ENCODE measurements at regions of chr1 and their contacts with region 1.

Region 1: GRCh38 chr1:9371391-9371935 is 78.8 kb downstream of the SPSB1 start:
- DNase-seq: no peak
- H3K4me3 ChIP-seq: no peak overlapping the region
- H3K27ac ChIP-seq: no peak overlapping the region
- H3K4me1 ChIP-seq: peaks cover 10% of the 10 kb centered on the region
- H3K27me3 ChIP-seq: no peaks in the 10 kb centered on the region
- CTCF ChIP-seq: no peak

Region 2: DNA sequence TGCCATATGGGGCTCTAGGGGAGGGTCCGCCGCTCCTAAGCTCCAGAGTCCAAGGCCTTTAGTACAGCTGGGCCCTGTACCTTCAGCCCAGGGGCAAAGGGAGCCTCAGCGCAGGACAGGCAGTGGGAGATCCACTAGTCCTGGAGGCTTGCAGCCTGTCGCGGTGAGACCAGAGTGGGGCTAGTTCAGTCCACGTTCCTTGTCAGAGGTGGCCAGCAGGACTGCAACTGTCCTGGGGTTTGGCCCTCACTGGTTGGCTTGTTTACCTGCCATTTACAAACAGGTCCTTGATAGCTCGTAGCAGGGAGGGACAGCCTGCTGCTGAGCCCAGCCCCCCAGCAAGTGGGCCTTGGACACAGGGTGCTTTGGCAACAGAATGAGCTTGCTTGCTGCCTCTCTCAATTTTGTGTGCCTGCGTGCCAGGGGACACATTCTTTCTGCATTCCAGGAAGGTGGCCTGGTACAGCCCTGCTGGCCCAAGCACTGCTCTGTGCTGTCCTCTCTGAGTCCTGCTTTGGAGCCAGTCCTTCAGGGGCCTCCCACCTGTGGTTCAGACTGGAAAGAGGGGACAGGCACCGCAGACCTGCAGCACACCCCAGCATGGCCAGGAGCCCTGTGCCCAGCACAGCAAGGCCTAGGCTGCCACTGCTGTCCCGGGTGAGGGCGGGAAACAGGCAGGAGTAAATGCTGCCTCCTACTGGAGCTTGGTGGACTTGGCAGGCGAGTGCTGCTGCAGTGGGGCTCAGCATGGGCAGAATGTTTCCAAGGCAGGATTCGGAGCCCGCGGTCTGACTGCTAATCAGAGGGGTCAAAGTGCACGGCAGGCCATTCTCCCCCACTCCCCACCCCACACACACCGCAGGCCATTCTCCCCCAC is 121.7 kb before region 1 on chr1:
- CTCF ChIA-PET with region 1: no interaction called
- dilution Hi-C with region 1: no loop called
- in situ Hi-C with region 1: loop called in 1 of 2 experiments (anchors 25 kb)
- intact Hi-C with region 1: no loop called
- DNase-seq: no peak
- H3K4me3 ChIP-seq: no peak overlapping the region
- H3K27ac ChIP-seq: no peak overlapping the region
- H3K4me1 ChIP-seq: no peaks in the 10 kb centered on the region
- H3K27me3 ChIP-seq: no peaks in the 10 kb centered on the region
- CTCF ChIP-seq: peak; percentile 63 to 72

Region 3: GRCh38 chr1:9269078-9269501 is 102.4 kb before region 1 on chr1:
- CTCF ChIA-PET with region 1: interaction called, 3 read pairs
- dilution Hi-C with region 1: loop called (anchors 10 kb)
- in situ Hi-C with region 1: loop called in 1 of 2 experiments (anchors 25 kb)
- intact Hi-C with region 1: no loop called
- DNase-seq: peak; percentile 15
- H3K4me3 ChIP-seq: no peak overlapping the region
- H3K27ac ChIP-seq: no peak overlapping the region
- H3K4me1 ChIP-seq: no peaks in the 10 kb centered on the region
- H3K27me3 ChIP-seq: no peaks in the 10 kb centered on the region
- CTCF ChIP-seq: no peak

Region 4: DNA sequence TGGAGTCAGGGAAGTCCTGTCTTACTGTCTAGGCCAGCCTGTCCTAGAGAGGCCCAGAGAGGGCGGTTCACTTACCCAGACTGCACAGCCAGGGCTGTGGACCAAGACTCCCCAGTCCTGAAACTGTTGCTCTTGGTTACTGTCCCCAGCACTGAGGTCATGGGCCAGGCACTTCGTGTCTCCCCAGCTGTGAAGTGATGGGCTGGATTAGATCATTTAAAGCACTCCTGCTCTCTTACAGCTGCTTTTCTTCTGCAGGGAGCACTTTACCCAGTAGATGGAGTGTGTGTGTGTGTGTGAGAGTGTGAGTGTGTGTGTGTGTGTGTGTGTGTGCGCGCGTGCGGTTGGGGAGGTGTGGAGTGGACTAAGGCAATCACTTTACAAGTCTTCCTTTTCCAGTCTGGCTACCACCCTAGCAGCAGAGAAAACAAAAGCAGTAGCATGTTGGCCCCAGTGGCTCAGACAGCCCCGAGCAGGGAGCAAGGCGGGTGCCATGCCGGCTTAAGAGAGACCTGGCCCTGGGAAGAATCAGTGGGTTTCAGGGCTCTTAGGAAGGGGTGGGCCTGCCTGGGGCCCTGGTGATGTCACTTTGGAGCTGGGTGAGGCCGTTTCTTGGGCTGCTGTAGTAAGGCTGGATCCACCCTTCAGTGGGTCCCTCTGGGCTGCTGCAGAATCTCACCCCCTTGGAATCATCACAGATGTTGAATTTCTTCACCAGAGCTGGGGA is 76.4 kb before region 1 on chr1:
- CTCF ChIA-PET with region 1: no interaction called
- dilution Hi-C with region 1: no loop called
- in situ Hi-C with region 1: no loop called
- intact Hi-C with region 1: no loop called
- DNase-seq: peak; percentile 29
- H3K4me3 ChIP-seq: peak overlapping the region in 1 of 3 experiments; percentile 96
- H3K27ac ChIP-seq: peak overlapping the region; percentile 63
- H3K4me1 ChIP-seq: peaks cover 36% of the 10 kb centered on the region
- H3K27me3 ChIP-seq: no peaks in the 10 kb centered on the region
- CTCF ChIP-seq: peak in 1 of 2 donors; percentile 7

Region 5: GRCh38 chr1:9317591-9318417 is 53.7 kb before region 1 on chr1:
- CTCF ChIA-PET with region 1: no interaction called
- dilution Hi-C with region 1: loop called (anchors 10 kb)
- in situ Hi-C with region 1: no loop called
- intact Hi-C with region 1: no loop called
- DNase-seq: no peak
- H3K4me3 ChIP-seq: no peak overlapping the region
- H3K27ac ChIP-seq: no peak overlapping the region
- H3K4me1 ChIP-seq: peaks cover 15% of the 10 kb centered on the region
- H3K27me3 ChIP-seq: no peaks in the 10 kb centered on the region
- CTCF ChIP-seq: no peak

Region 6: DNA sequence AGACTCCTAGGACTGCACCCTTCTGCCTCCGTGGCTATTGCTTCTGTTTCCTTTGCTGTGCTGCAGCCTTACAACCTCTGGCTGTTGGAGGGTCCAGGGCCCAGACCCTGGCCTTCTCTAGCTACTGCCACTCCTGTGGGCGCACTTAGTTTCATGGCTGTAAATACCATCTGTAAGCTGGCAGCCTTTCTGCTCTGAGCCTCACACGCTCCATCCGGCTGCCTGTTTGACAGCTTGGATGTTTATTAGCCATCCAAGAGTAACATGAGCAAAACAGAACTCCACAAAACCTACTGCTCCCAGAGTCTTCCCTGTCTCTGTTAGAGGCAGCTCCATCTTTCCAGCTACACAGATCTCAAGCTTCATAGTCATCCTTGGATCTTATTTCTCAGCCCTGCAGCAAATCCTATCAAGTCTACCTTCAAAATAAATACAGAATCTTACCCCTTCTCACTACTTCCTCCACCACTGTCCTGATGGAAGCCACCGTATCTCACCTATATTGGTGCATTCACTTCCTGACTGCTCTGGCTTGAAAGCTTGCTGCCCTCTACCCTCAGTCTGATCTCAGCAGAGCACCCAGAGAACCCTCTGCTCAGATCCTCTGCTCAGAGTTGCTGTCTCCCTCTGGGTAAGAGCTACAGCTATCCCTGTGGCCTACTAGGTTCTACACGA is 186.9 kb after region 1 on chr1:
- CTCF ChIA-PET with region 1: no interaction called
- dilution Hi-C with region 1: loop called (anchors 10 kb)
- in situ Hi-C with region 1: no loop called
- intact Hi-C with region 1: no loop called
- DNase-seq: no peak
- H3K4me3 ChIP-seq: no peak overlapping the region
- H3K27ac ChIP-seq: no peak overlapping the region
- H3K4me1 ChIP-seq: peaks cover 4% of the 10 kb centered on the region
- H3K27me3 ChIP-seq: no peaks in the 10 kb centered on the region
- CTCF ChIP-seq: no peak

Measured in mammary epithelial cell (primary cell).